ENCODE measurements at regions of chr19 and their contacts with region 1.

Region 1: DNA sequence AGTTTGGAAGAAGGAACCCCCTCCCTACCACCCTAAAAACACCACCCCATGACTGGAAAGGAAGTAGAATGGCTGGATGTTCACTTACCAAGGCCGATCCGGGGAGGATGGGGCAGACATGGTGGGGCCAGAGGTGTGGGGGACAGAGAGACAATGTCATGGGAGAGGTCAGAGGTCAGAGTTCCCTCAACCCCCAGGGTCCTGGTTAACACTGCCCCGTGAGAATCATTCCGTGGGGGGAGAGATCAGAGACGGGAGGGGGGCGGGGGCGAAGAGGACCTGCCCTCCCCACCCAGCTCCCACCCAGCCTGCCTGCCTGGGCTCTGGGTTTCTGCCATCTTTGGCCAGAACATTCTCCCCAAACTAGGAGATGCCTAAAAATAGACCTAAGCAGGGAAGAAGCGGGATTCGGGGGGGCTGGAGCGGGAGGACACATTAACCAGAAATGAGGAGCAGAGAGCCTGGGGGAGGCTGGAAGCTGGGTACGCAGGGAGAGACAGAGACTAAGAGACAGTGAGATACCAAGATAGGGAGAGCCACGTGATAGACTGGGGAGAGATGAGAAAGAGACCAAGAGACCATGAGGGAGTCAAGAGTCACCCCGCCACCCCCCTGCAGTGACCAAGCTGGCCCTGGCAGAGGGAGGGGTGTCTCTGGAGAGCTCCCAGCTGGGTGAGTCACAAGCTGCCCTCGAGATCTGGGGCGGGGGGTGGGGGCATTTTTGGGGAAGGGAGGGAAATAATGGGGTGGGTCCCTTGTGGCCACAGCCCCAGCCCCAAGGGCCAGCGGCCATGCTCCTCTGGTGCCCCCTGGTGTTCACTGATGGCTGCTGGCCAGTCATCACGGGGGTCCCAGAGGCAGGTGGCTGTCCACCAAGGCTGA is 6.1 kb upstream of the KANK2 start:
- DNase-seq: peak in 9 of 10 donors; percentile 9 to 70 (median 60)
- H3K4me3 ChIP-seq: peak overlapping the region in 39 of 59 donors; percentile 3 to 51 (median 28)
- H3K27ac ChIP-seq: peak overlapping the region in 58 of 59 donors; percentile 23 to 92 (median 78)
- H3K27me3 ChIP-seq: no peaks in the 10 kb centered on the region
- CTCF ChIP-seq: peak; percentile 70 to 97 (median 86)

Region 2: GRCh38 chr19:9565900-9566705 is 1637.3 kb before region 1 on chr19:
- intact Hi-C with region 1: no loop called
- DNase-seq: no peak
- H3K4me3 ChIP-seq: peak overlapping the region in 1 of 59 donors; percentile 8
- H3K27ac ChIP-seq: no peak overlapping the region
- H3K27me3 ChIP-seq: no peaks in the 10 kb centered on the region
- CTCF ChIP-seq: no peak

Region 3: DNA sequence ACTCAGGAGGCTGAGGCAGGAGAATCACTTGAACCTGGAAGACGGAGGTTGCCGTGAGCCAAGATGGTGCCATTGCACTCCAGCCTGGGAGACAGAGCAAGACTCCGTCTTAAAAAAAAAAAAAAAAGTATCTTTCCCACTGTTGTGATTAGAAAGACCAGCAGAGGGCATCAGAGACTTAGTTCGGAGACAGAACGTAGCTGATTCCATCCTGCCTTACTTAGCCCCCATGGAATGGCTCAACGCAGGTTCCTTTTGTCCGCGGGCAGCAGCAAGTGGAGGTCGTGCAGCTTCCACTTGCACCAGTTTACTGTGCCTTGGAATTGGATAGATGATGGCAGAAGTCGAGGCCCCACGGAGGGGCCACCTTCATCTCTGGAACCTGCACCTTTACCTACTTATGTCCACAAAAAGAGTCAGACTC is 266.8 kb before region 1 on chr19:
- intact Hi-C with region 1: loop called in 1 of 2 experiments (anchors 10 kb)
- DNase-seq: peak in 2 of 10 donors; percentile 36 to 70
- H3K4me3 ChIP-seq: peak overlapping the region in 39 of 59 donors; percentile 1 to 54 (median 30)
- H3K27ac ChIP-seq: peak overlapping the region in 31 of 59 donors; percentile 24 to 76 (median 58)
- H3K27me3 ChIP-seq: no peaks in the 10 kb centered on the region
- CTCF ChIP-seq: peak; percentile 32 to 79 (median 63)

Region 4: GRCh38 chr19:11035441-11036377 is 167.7 kb before region 1 on chr19:
- intact Hi-C with region 1: loop called in 1 of 2 experiments (anchors 5 kb)
- DNase-seq: peak; percentile 68 to 86 (median 80)
- H3K4me3 ChIP-seq: no peak overlapping the region
- H3K27ac ChIP-seq: peak overlapping the region in 27 of 59 donors; percentile 13 to 66 (median 31)
- H3K27me3 ChIP-seq: no peaks in the 10 kb centered on the region
- CTCF ChIP-seq: peak; percentile 55 to 89 (median 79)